Heart left ventricle (tissue), 16 donors: ENCODE measurements at regions of chr2 and their contacts with region 1.

Region 1: GRCh38 chr2:182784777-182785176 is 68.7 kb downstream of the DNAJC10 start:
- DNase-seq: no peak
- ATAC-seq: no peak
- H3K4me3 ChIP-seq: no peak overlapping the region
- H3K27ac ChIP-seq: no peak overlapping the region
- H3K4me1 ChIP-seq: no peaks in the 10 kb centered on the region
- H3K27me3 ChIP-seq: no peaks in the 10 kb centered on the region
- CTCF ChIP-seq: peak; percentile 26 to 67 (median 52)
- POLR2A ChIP-seq: no peak

Region 2: DNA sequence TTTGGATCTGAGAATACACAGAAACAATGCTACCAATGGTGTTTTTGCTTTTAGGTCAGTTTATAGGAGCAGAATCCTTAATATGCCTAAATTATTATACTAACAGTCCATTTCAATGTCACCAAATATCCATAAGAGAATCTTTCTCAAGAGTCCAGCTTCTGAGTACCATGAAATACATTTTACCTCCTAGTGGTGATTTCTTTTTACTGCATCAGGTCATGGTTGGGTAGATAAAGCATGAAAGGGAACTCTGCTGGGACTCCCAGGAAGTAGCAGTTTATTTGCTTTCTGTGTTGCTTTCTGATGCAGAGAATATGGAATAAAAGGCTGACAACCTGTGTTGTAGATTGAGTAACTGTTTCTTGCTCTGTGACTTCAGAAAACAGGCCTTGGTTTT is 683.5 kb before region 1 on chr2:
- intact Hi-C with region 1: no loop called
- DNase-seq: no peak
- ATAC-seq: no peak
- H3K4me3 ChIP-seq: no peak overlapping the region
- H3K27ac ChIP-seq: no peak overlapping the region
- H3K4me1 ChIP-seq: no peaks in the 10 kb centered on the region
- H3K27me3 ChIP-seq: no peaks in the 10 kb centered on the region
- CTCF ChIP-seq: peak in 1 of 12 donors; percentile 20
- POLR2A ChIP-seq: no peak

Region 3: GRCh38 chr2:182565906-182566567 is 218.7 kb before region 1 on chr2:
- intact Hi-C with region 1: no loop called
- DNase-seq: no peak
- ATAC-seq: no peak
- H3K4me3 ChIP-seq: no peak overlapping the region
- H3K27ac ChIP-seq: no peak overlapping the region
- H3K4me1 ChIP-seq: no peaks in the 10 kb centered on the region
- H3K27me3 ChIP-seq: no peaks in the 10 kb centered on the region
- CTCF ChIP-seq: no peak
- POLR2A ChIP-seq: no peak

Region 4: GRCh38 chr2:182907081-182907830 is 122.5 kb after region 1 on chr2:
- intact Hi-C with region 1: loop called in 2 of 10 experiments (anchors 10 kb)
- DNase-seq: peak in 1 of 5 donors; percentile 22
- ATAC-seq: peak in 1 of 4 donors; percentile 50
- H3K4me3 ChIP-seq: no peak overlapping the region
- H3K27ac ChIP-seq: no peak overlapping the region
- H3K4me1 ChIP-seq: no peaks in the 10 kb centered on the region
- H3K27me3 ChIP-seq: no peaks in the 10 kb centered on the region
- CTCF ChIP-seq: no peak
- POLR2A ChIP-seq: no peak

Region 5: DNA sequence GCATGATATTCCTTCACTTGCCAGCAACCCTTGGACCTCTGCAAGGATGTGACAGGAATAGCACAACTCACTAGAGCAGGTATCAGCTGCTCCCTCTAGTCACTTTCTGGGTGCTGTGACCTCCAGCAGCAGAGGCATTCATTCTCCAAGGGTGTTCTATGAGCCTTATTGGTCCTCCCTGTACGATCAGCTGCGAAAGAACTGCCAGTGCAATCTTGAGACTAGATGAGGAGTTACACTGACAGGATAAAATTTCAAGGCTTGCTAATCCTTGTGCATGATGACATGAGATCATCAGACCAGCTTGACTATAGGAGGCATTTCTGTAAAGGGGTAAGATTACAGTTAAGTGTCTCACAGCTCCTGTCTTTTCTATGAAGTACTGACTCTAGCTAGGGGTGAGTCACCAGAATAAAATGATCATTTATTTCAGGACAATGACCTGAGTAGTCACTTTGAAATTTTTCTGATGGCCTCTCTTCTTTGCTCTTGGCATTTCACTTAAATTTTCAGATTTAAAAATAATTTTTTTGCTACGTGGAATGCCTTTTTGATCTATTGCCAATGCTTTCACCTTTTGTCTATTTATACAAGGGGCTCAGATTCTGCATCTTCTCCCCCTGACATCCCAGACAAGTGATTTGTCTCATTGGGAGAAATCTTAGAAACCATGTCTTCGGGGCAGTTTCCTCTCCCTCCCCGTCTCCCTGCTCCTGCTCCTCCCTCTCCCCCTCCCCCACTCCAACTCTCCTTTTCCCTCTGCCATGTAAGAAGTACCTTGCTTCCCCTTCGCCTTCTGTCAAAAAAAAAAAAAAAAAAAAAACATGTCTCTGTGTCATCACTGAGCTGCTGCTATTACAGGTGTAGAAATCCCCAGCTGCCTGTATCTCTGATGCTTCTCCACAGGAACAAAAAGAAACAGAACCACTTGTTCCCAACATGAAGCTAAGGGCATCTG is 130.9 kb after region 1 on chr2:
- intact Hi-C with region 1: loop called in 1 of 10 experiments (anchors 10 kb)
- DNase-seq: peak in 1 of 5 donors; percentile 25
- ATAC-seq: peak; percentile 51 to 86 (median 79)
- H3K4me3 ChIP-seq: no peak overlapping the region
- H3K27ac ChIP-seq: peak overlapping the region in 4 of 12 donors; percentile 3 to 23 (median 8)
- H3K4me1 ChIP-seq: peaks cover 0 to 11% (median 0%) of the 10 kb centered on the region in 12 donors
- H3K27me3 ChIP-seq: no peaks in the 10 kb centered on the region
- CTCF ChIP-seq: no peak
- POLR2A ChIP-seq: no peak

Region 6: DNA sequence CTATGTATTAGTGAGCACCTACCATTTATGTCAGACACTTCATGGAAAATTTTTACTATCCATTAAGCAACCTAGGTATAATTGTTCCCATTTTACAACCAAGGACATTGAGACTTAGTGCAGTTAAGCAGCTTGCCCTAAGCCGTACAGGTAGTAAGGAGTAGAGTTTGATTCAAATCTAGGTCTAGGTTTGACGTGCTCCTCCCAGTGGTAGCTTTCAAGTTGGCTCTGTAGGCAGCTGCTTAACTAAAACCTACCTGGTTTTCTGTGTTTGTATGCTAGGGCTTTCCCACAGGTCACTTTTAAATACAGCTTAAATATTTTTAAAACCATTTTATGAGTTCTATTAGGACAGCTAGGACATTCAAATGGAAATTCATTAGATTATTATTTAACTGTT is 409.1 kb after region 1 on chr2:
- intact Hi-C with region 1: no loop called
- DNase-seq: no peak
- ATAC-seq: no peak
- H3K4me3 ChIP-seq: no peak overlapping the region
- H3K27ac ChIP-seq: no peak overlapping the region
- H3K4me1 ChIP-seq: no peaks in the 10 kb centered on the region
- H3K27me3 ChIP-seq: no peaks in the 10 kb centered on the region
- CTCF ChIP-seq: no peak
- POLR2A ChIP-seq: no peak